ENCODE measurements at regions of chr19 and their contacts with region 1.

Region 1: GRCh38 chr19:35066691-35067563 is 25.4 kb downstream of the HPN start:
- DNase-seq: peak; percentile 97
- ATAC-seq: peak; percentile 92
- H3K4me3 Mint-ChIP-seq: peak overlapping the region; percentile 57
- H3K27ac Mint-ChIP-seq: peak overlapping the region; percentile 55
- H3K4me1 Mint-ChIP-seq: peaks cover 20% of the 10 kb centered on the region
- H3K27me3 Mint-ChIP-seq: no peaks in the 10 kb centered on the region
- CTCF ChIP-seq: peak; percentile 86

Region 2: GRCh38 chr19:34974646-34975045 is 92.3 kb before region 1 on chr19:
- CTCF ChIA-PET with region 1: interaction called, 10 read pairs
- POLR2A ChIA-PET with region 1: no interaction called
- intact Hi-C with region 1: no loop called
- DNase-seq: no peak
- ATAC-seq: no peak
- H3K4me3 Mint-ChIP-seq: no peak overlapping the region
- H3K27ac Mint-ChIP-seq: no peak overlapping the region
- H3K4me1 Mint-ChIP-seq: peaks cover 24% of the 10 kb centered on the region
- H3K27me3 Mint-ChIP-seq: no peaks in the 10 kb centered on the region
- CTCF ChIP-seq: no peak

Region 3: GRCh38 chr19:35055715-35056179 is 11.2 kb before region 1 on chr19:
- CTCF ChIA-PET with region 1: interaction called, 18 read pairs
- POLR2A ChIA-PET with region 1: interaction called, 3 read pairs
- intact Hi-C with region 1: no loop called
- DNase-seq: peak; percentile 46
- ATAC-seq: peak; percentile 66
- H3K4me3 Mint-ChIP-seq: no peak overlapping the region
- H3K27ac Mint-ChIP-seq: no peak overlapping the region
- H3K4me1 Mint-ChIP-seq: no peaks in the 10 kb centered on the region
- H3K27me3 Mint-ChIP-seq: no peaks in the 10 kb centered on the region
- CTCF ChIP-seq: peak; percentile 14

Region 4: GRCh38 chr19:35124098-35125060 is 57.5 kb after region 1 on chr19:
- CTCF ChIA-PET with region 1: interaction called, 12 read pairs
- POLR2A ChIA-PET with region 1: no interaction called
- intact Hi-C with region 1: no loop called
- DNase-seq: peak; percentile 85
- ATAC-seq: peak; percentile 99
- H3K4me3 Mint-ChIP-seq: peak overlapping the region; percentile 73
- H3K27ac Mint-ChIP-seq: peak overlapping the region; percentile 43
- H3K4me1 Mint-ChIP-seq: peaks cover 10% of the 10 kb centered on the region
- H3K27me3 Mint-ChIP-seq: no peaks in the 10 kb centered on the region
- CTCF ChIP-seq: no peak

Region 5: GRCh38 chr19:35140962-35141637 is 74.2 kb after region 1 on chr19:
- CTCF ChIA-PET with region 1: interaction called, 42 read pairs
- POLR2A ChIA-PET with region 1: interaction called, 4 read pairs
- intact Hi-C with region 1: no loop called
- DNase-seq: peak; percentile 98
- ATAC-seq: peak; percentile 96
- H3K4me3 Mint-ChIP-seq: peak overlapping the region; percentile 74
- H3K27ac Mint-ChIP-seq: peak overlapping the region; percentile 26
- H3K4me1 Mint-ChIP-seq: peaks cover 32% of the 10 kb centered on the region
- H3K27me3 Mint-ChIP-seq: peaks cover 7% of the 10 kb centered on the region
- CTCF ChIP-seq: peak; percentile 39